MCF 10A (cell line): ENCODE measurements at regions of chr14 and their contacts with region 1.

Region 1: GRCh38 chr14:63375771-63376170 is 57.0 kb upstream of the GPHB5 start:
- DNase-seq: peak; percentile 75
- H3K4me3 Mint-ChIP-seq: no peak overlapping the region
- H3K27ac Mint-ChIP-seq: peak overlapping the region; percentile 28
- H3K4me1 Mint-ChIP-seq: peaks cover 7% of the 10 kb centered on the region
- H3K27me3 Mint-ChIP-seq: no peaks in the 10 kb centered on the region
- CTCF ChIP-seq: no peak

Region 2: GRCh38 chr14:63174760-63175211 is 201.0 kb before region 1 on chr14:
- CTCF ChIA-PET with region 1: no interaction called
- POLR2A ChIA-PET with region 1: no interaction called
- intact Hi-C with region 1: loop called (anchors 10 kb)
- DNase-seq: peak; percentile 60
- H3K4me3 Mint-ChIP-seq: no peak overlapping the region
- H3K27ac Mint-ChIP-seq: no peak overlapping the region
- H3K4me1 Mint-ChIP-seq: peaks cover 19% of the 10 kb centered on the region
- H3K27me3 Mint-ChIP-seq: no peaks in the 10 kb centered on the region
- CTCF ChIP-seq: peak; percentile 58

Region 3: GRCh38 chr14:63328787-63329737 is 46.7 kb before region 1 on chr14:
- CTCF ChIA-PET with region 1: no interaction called
- POLR2A ChIA-PET with region 1: no interaction called
- intact Hi-C with region 1: no loop called
- DNase-seq: no peak
- H3K4me3 Mint-ChIP-seq: no peak overlapping the region
- H3K27ac Mint-ChIP-seq: no peak overlapping the region
- H3K4me1 Mint-ChIP-seq: no peaks in the 10 kb centered on the region
- H3K27me3 Mint-ChIP-seq: no peaks in the 10 kb centered on the region
- CTCF ChIP-seq: no peak